Activated T-helper 2 cell treated with anti-CD3 and anti-CD28 coated beads, Interferon-gamma antibody, Interleukin-2, Interleukin-4, amounts not matched to agents 10 μg/mL and 5 μg/mL and 100 μg/mL, durations not matched to agents 14 hours and 24 hours and 36 hours (primary cell): ENCODE measurements at regions of chr11 and their contacts with region 1.

Region 1: GRCh38 chr11:27385245-27385644 is 22.2 kb upstream of the CCDC34 start:
- DNase-seq: no peak
- H3K4me3 Mint-ChIP-seq: no peak overlapping the region
- H3K27ac Mint-ChIP-seq: no peak overlapping the region
- H3K4me1 Mint-ChIP-seq: peaks cover 38% of the 10 kb centered on the region
- H3K27me3 Mint-ChIP-seq: peaks cover 35% of the 10 kb centered on the region

Region 2: DNA sequence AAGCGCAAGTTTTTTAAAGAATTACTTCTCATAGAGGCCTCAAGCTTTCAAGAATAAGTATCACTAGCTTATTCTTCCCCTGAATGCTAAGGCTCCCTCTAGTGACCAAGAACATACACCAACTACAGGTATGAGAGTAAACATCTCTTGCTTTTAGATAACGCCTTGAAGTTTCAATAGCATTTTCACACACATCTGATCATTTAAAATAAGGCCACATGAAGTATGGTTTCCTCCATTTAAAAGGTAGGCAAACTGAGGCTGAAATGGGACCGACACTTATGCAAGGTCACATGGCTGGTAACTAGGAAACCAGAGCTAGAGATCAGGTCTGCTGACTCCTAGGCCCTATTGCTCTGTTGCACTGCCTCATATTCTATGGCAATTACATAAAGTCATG is 88.7 kb before region 1 on chr11:
- intact Hi-C with region 1: loop called (anchors 1 kb)
- DNase-seq: no peak
- H3K4me3 Mint-ChIP-seq: no peak overlapping the region
- H3K27ac Mint-ChIP-seq: no peak overlapping the region
- H3K4me1 Mint-ChIP-seq: peaks cover 5% of the 10 kb centered on the region
- H3K27me3 Mint-ChIP-seq: peaks cover 22% of the 10 kb centered on the region

Region 3: DNA sequence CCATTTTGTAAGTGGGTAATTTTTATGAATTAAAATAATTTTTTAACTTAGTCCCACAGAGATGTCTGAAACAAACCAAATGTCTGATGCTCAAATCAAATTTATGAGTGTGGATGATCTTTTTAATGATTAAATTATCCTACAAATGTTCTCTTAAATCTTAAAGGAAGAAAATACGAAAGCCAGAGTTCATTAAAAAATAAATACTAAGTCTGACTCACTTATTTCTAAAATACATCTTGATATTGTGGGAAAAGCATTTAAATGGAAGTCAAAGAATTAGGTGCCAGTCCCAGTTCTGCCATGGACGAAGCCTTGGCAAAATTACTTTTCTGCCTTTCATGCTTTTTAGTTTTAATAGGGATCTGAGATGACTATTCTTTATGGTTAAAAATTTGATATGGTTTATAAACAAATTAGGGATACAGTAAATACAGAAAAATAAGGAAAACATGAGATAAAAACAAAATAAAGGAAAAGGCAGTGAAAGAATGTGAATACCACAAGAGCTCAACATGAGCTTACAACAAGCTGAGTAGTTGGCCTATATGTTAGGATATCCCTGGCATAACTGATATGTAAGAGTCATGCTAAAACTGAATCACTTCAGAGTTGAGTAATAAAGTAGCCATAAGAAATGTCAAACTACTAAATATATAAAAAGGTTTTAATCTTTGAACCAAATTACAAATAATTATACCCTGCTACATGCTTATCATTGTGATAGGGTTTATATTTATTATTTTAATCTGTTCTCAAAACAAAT is 31.5 kb before region 1 on chr11:
- intact Hi-C with region 1: loop called (anchors 5 kb)
- DNase-seq: no peak
- H3K4me3 Mint-ChIP-seq: no peak overlapping the region
- H3K27ac Mint-ChIP-seq: no peak overlapping the region
- H3K4me1 Mint-ChIP-seq: peaks cover 3% of the 10 kb centered on the region
- H3K27me3 Mint-ChIP-seq: no peaks in the 10 kb centered on the region

Region 4: DNA sequence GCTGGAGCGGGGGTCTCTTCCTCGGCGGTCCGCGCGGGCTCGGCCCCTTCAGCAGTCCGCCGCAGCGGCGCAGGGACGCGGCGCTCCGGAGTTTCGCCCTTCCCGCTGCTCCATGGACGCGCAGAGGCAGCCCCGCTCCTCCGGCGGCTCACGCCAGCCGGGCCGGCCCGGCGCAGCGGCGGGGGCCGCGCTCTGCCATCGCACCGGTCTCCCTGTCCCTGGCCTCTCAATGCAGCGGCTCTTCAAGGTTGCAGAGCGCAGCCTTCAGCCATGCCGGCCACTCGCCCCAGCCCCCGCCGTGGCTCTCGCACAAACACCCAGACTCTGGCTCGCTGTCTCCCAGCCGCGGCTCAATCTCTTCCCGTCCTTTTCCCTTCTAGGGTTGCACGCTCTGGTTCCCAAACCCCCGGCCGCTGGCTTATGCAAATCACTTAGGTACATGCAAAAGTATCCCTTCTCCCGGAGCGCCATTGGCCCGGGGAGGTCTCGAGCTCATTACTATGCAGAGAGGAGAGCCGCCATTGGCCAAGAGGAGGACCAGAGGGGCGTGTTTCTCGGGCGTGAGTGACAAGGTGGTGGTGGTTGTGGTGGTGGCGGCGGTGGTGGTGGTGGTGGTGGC is 87.3 kb after region 1 on chr11 and contains the start of gene LGR4:
- intact Hi-C with region 1: loop called (anchors 5 kb)
- DNase-seq: peak; percentile 26
- H3K4me3 Mint-ChIP-seq: peak within 1 kb of the TSS; percentile 90
- H3K27ac Mint-ChIP-seq: no peak within 1 kb of the TSS
- H3K4me1 Mint-ChIP-seq: peaks cover 4% of the 10 kb centered on the region
- H3K27me3 Mint-ChIP-seq: peaks cover 70% of the 10 kb centered on the region
- total RNA-seq, gene LGR4: 0.05 and 0.14 TPM in 2 replicates

Region 5: GRCh38 chr11:27740362-27741024 is 355.2 kb after region 1 on chr11:
- intact Hi-C with region 1: no loop called
- DNase-seq: no peak
- H3K4me3 Mint-ChIP-seq: no peak overlapping the region
- H3K27ac Mint-ChIP-seq: no peak overlapping the region
- H3K4me1 Mint-ChIP-seq: no peaks in the 10 kb centered on the region
- H3K27me3 Mint-ChIP-seq: no peaks in the 10 kb centered on the region